Heart left ventricle (tissue), 16 donors: ENCODE measurements at regions of chr18 and their contacts with region 1.

Region 1: DNA sequence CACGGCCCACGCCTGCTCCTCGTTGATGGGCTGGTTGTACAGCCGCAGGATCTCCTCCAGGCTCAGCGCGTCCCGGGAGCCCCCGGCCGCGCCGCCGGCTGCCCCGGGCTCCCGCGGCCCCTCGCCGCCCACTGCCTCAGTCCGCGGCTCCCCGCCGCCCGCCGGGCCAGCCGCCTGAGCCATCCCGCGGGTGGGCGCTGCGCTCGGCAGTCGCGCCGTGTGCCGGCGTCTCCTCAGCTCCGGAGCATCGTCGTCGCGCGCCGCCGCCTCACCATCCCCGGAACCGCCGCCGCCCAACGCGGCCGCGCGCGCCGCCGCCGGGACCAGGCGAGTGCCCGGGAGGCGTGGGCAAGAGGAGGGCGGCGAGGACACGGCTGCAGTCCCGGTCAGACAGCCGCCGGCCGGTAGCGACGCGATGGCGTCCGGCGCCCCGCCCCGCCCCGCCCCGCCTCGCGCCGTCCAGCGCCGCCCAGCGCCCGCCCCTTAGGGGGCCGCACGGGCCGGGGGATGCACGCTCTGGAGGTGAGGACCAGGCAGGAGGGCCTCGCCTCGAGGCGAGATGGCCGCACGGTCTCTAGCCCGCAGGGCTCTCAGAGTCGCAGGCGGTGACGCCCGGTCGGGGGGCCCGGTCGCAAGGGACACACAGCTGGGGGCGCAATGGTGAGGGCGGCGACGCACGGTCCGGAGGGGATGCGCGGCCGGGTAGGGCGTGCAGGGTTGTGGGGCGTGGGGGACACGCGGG is at the start of gene SPIRE1:
- DNase-seq: peak; percentile 82 to 89 (median 85)
- ATAC-seq: peak; percentile 83 to 94 (median 88)
- H3K4me3 ChIP-seq: peak within 1 kb of the TSS; percentile 61 to 95 (median 80)
- H3K27ac ChIP-seq: peak within 1 kb of the TSS; percentile 52 to 99 (median 96)
- H3K4me1 ChIP-seq: peaks cover 0 to 32% (median 17%) of the 10 kb centered on the region in 12 donors
- H3K27me3 ChIP-seq: no peaks in the 10 kb centered on the region
- CTCF ChIP-seq: peak in 5 of 12 donors; percentile 3 to 35 (median 28)
- POLR2A ChIP-seq: peak in 1 of 2 donors; percentile 58
- total RNA-seq, gene SPIRE1: 35.8 to 67.6 (median 48.0) TPM

Region 2: DNA sequence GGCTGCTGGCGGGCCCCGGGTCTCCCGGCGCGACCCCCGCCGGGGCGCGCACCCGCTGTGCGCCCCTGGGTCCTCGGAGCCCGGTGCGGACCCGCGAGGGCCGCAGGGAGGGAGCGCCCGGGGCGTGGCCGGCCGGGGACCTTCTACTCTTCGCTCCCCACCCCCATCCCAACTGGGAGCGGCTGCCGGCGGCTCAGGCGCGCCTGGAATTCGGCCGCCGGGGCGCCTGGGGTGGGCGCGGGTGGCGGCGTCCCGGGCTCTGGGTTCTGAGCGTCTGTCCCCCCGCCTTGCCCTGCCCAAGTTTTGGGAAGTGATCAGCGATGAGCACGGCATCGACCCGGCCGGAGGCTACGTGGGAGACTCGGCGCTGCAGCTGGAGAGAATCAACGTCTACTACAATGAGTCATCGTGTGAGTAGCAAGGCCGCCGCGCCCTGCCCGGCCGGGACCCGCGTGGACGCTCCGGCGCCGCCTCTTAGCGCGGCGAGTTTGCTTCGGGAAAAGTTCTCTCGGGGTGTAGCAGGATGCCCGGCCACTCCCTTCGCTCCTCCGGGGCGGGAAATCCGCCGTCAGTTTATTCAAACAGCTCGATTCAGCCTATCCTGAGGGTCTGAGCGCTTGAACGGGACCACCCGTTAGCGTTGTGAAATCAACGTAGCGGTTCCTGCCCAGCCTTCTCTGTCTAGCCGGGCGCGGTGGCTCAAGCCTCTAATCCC is 349.3 kb before region 1 on chr18:
- intact Hi-C with region 1: loop called in 1 of 10 experiments (anchors 10 kb)
- DNase-seq: peak; percentile 85 to 93 (median 90)
- ATAC-seq: peak; percentile 73 to 88 (median 88)
- H3K4me3 ChIP-seq: peak overlapping the region; percentile 44 to 98 (median 82)
- H3K27ac ChIP-seq: peak overlapping the region; percentile 94 to 100 (median 98)
- H3K4me1 ChIP-seq: peaks cover 0 to 44% (median 27%) of the 10 kb centered on the region in 12 donors
- H3K27me3 ChIP-seq: no peaks in the 10 kb centered on the region
- CTCF ChIP-seq: no peak
- POLR2A ChIP-seq: peak in 1 of 2 donors; percentile 1

Region 3: DNA sequence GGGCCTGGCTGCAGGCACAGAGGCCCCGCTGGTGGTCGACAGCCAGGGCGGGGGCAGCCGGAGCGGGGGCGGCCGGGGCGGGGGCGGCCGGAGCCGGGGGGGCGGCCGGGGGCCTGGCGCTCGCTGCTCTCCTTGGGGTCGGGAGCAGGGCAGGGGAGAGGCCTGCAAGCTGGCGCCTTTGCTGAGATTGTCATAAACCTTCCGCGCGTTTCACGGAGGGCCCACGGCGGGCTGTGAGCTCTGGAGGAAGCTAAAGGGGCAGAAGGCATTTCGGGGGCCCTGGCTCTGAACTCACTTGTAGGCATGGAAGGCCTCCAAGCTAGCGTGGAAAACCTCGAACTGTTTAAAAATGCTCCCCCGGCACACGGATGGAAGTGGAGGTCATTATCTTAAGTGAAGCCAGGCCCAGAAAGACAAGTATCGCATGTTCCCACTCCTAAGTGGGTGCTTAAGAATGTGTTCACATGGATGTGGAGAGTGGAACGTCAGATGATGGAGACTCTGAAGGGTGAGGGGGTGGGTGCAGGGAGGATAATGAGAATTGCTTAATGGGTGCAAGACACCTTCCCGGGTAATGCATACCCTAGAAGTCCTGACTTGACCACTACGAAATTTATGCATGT is 249.5 kb before region 1 on chr18:
- intact Hi-C with region 1: loop called in 3 of 10 experiments (anchors 5 kb)
- DNase-seq: peak in 2 of 5 donors; percentile 29 to 64
- ATAC-seq: no peak
- H3K4me3 ChIP-seq: peak overlapping the region; percentile 31 to 84 (median 64)
- H3K27ac ChIP-seq: peak overlapping the region in 11 of 12 donors; percentile 74 to 90 (median 85)
- H3K4me1 ChIP-seq: peaks cover 0 to 26% (median 8%) of the 10 kb centered on the region in 12 donors
- H3K27me3 ChIP-seq: peaks cover 0 to 12% (median 0%) of the 10 kb centered on the region in 9 donors
- CTCF ChIP-seq: no peak
- POLR2A ChIP-seq: no peak

Region 4: DNA sequence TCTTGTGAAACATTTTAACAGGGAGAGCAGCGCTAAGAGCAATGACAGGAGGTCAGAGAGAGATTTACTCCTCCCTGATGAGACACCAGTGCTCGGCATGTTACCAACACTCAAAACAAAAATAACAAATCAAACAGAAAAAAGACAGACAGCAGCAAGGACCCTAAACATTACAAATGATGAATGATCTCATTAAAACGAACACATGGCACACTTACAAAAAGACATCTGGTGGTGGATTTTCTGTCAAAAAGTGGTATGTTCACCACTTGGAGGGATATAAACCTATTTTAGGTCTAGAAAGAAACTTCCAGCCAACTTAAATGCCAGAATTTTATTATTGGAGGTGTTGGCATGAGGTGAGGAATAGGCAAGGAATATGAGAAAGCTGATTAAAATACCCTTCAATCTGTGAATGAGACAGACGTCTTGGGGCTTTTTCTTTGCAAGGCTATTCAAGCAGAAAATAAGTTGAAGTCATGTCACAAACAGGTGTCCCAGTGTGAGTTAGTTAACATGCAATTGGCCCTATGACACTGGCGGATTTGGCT is 137.3 kb before region 1 on chr18:
- intact Hi-C with region 1: loop called in 1 of 10 experiments (anchors 10 kb)
- DNase-seq: no peak
- ATAC-seq: peak in 1 of 4 donors; percentile 34
- H3K4me3 ChIP-seq: no peak overlapping the region
- H3K27ac ChIP-seq: no peak overlapping the region
- H3K4me1 ChIP-seq: peaks cover 0 to 30% (median 16%) of the 10 kb centered on the region in 12 donors
- H3K27me3 ChIP-seq: no peaks in the 10 kb centered on the region
- CTCF ChIP-seq: no peak
- POLR2A ChIP-seq: no peak

Region 5: DNA sequence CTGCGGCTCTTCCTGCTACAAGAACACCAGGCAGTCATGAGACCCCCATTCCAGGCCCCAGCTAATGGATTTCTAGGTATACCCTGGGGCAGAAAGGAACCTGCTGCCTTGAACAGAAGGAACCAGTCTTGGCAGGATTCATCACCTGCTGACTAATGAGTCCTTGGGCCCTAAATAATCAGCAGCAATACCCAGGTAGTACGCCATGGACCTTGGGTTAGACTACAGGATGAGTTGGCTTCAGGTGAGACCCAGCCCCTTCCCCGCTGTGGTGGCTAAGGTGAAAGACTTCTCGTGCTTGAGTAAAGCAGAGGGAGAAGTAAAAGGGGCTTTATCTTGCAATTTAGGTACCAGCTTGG is 105.0 kb before region 1 on chr18:
- intact Hi-C with region 1: loop called in 3 of 10 experiments (anchors 5 to 10 kb)
- DNase-seq: no peak
- ATAC-seq: no peak
- H3K4me3 ChIP-seq: no peak overlapping the region
- H3K27ac ChIP-seq: peak overlapping the region in 1 of 12 donors; percentile 10
- H3K4me1 ChIP-seq: peaks cover 0 to 18% (median 6%) of the 10 kb centered on the region in 12 donors
- H3K27me3 ChIP-seq: no peaks in the 10 kb centered on the region
- CTCF ChIP-seq: no peak
- POLR2A ChIP-seq: no peak

Region 6: GRCh38 chr18:13036622-13037320 is 378.9 kb after region 1 on chr18:
- intact Hi-C with region 1: no loop called
- DNase-seq: no peak
- ATAC-seq: peak in 2 of 4 donors; percentile 13 to 34
- H3K4me3 ChIP-seq: no peak overlapping the region
- H3K27ac ChIP-seq: no peak overlapping the region
- H3K4me1 ChIP-seq: no peaks in the 10 kb centered on the region
- H3K27me3 ChIP-seq: no peaks in the 10 kb centered on the region
- CTCF ChIP-seq: no peak
- POLR2A ChIP-seq: no peak